Vagina (tissue), 2 donors: ENCODE measurements at regions of chr9 and their contacts with region 1.

Region 1: GRCh38 chr9:75001719-75002422 is 26.2 kb downstream of the CARNMT1 start:
- DNase-seq: no peak
- H3K4me3 ChIP-seq: no peak overlapping the region
- H3K27ac ChIP-seq: no peak overlapping the region
- H3K4me1 ChIP-seq: no peaks in the 10 kb centered on the region
- H3K27me3 ChIP-seq: no peaks in the 10 kb centered on the region
- CTCF ChIP-seq: peak; percentile 70 to 83 (median 83)
- POLR2A ChIP-seq: no peak

Region 2: GRCh38 chr9:74645007-74645639 is 356.7 kb before region 1 on chr9:
- intact Hi-C with region 1: loop called (anchors 5 kb)
- DNase-seq: no peak
- H3K4me3 ChIP-seq: no peak overlapping the region
- H3K27ac ChIP-seq: no peak overlapping the region
- H3K4me1 ChIP-seq: no peaks in the 10 kb centered on the region
- H3K27me3 ChIP-seq: no peaks in the 10 kb centered on the region
- CTCF ChIP-seq: no peak
- POLR2A ChIP-seq: no peak

Region 3: GRCh38 chr9:74773886-74774479 is 227.9 kb before region 1 on chr9:
- intact Hi-C with region 1: loop called (anchors 2 kb)
- DNase-seq: no peak
- H3K4me3 ChIP-seq: no peak overlapping the region
- H3K27ac ChIP-seq: no peak overlapping the region
- H3K4me1 ChIP-seq: no peaks in the 10 kb centered on the region
- H3K27me3 ChIP-seq: no peaks in the 10 kb centered on the region
- CTCF ChIP-seq: peak; percentile 67 to 83 (median 81)
- POLR2A ChIP-seq: no peak

Region 4: DNA sequence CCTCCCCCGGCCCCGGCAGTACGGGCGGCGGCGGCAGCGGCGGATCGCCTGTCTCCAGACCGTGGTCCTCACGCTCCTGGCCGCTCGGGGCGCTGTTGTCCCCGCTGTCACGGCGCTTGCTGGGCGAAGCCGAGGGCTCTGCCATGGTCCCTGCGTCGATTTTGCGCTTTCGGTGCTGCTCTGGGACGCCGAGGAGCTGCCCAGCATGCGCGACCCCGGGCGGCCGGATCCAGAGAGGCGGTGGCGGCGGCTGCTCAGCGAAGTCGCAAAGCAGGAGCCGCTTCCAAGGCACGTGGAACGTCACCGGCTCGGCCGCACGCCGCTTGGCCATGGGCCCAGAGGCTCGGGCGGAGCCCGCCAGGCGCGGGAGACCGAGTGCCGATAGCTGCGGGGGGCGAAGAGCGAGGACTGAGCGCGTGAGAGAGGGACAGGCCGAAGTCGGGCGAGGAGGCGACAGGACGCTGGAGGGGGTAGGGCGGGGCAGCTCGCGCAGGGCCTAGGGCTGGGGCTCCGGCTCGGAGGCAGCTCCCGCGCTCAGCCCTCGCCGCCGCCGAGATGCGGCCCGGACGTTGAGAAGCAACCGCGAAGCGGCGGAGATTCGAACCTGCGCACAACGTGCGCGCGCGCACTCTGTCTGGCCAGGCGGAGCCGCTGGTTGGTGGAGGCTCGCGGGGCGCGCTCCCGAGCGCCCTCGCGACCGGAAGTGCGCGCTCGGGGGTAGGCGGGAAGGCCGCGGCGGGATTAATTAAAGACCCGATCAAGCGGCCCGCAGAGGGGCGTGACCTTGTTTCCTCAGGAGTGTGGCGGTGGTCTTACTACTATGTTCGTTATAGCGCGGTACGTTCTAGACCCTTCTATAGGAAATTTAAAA is 49.4 kb before region 1 on chr9 and contains the start of gene C9orf40:
- intact Hi-C with region 1: loop called (anchors 10 kb)
- DNase-seq: no peak
- H3K4me3 ChIP-seq: peak within 1 kb of the TSS; percentile 57 to 90
- H3K27ac ChIP-seq: peak within 1 kb of the TSS; percentile 98
- H3K4me1 ChIP-seq: peaks cover 31% of the 10 kb centered on the region
- H3K27me3 ChIP-seq: no peaks in the 10 kb centered on the region
- CTCF ChIP-seq: peak; percentile 11 to 67 (median 46)
- POLR2A ChIP-seq: peak in 1 of 2 donors; percentile 46
- total RNA-seq, gene C9orf40: 5.6 TPM

Region 5: DNA sequence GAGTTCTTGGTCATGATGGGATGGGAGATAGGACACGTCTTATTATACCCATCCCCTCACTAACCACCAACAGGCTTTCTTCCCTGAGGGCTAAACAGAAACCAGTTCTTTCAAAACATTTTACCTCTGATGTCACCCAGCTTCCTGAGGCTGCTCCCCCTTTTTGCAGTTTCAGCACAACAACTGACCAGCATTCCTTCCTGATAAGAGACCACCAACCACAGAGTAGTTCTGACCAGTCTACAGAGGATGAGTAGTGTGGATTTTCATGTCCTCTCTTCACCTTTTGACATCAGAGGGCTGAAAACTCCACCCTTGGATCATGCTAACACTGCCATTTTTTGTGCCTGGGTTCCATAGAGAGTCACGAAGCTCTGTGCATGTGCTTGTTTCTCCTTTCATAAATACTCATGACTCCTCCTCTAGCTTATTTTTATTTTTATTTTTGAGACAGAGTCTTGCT is 169.1 kb after region 1 on chr9:
- intact Hi-C with region 1: no loop called
- DNase-seq: no peak
- H3K4me3 ChIP-seq: no peak overlapping the region
- H3K27ac ChIP-seq: no peak overlapping the region
- H3K4me1 ChIP-seq: no peaks in the 10 kb centered on the region
- H3K27me3 ChIP-seq: no peaks in the 10 kb centered on the region
- CTCF ChIP-seq: no peak
- POLR2A ChIP-seq: no peak

Region 6: DNA sequence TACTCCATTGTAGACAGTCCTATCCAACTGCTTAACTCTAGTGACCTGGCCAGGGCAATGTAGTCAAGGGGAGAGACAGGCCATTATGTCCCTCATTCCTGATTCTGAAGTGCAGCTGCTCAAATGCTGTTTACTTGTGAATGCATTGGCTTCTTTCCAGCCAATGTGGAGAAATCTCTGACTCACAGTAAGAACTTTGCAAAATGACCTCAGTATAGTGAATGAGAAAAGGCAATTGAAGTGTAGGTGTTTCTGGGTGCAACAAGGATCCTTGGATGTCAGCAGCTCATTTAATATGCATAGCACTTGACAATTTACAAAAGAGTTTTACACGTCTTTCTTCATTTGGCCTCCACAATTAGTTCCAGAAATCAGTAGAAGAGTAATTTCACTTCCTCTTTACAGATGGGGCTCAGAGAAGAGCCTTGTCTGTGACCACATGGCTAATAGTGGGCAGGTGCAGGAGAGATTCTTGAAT is 453.6 kb after region 1 on chr9:
- intact Hi-C with region 1: no loop called
- DNase-seq: no peak
- H3K4me3 ChIP-seq: no peak overlapping the region
- H3K27ac ChIP-seq: no peak overlapping the region
- H3K4me1 ChIP-seq: peaks cover 45% of the 10 kb centered on the region
- H3K27me3 ChIP-seq: no peaks in the 10 kb centered on the region
- CTCF ChIP-seq: no peak
- POLR2A ChIP-seq: no peak